Cardiac septum (tissue), 1 donor: ENCODE measurements at regions of chr11 and their contacts with region 1.

Region 1: DNA sequence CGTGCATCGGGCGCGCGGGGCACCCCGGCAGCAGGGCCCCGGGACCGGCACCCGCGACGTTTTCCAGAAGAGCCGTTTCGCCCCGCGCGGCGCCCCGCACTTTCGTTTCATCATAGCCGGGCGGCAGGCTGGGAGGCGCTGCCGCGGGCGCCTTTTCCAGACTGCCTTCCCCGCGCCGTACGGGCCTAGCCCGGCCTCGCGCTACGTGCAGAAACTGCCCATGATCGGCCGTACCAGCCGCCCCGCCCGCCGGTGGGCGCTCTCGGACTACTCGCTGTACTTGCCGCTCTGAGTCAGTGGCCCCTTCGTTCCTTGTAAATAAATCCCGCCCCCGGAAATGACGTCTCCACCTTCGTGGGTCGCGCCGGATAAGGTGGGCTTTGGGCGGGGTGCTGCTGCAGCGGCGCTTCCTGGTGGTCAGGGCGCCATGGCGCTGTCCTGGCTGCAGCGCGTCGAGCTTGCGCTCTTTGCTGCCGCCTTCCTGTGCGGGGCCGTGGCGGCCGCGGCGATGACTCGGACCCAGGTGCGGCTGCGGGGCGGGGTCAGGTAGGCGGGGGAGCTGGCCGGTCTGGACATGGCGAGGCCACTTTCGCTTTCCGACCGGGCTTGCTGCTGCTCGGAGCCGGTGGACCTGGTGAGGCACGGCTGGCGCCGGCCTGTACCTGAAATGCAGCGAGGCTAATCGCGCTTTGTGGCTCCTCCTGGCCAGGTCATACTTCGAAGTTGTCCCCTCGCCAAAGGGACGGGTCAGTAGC is at the start of gene TMEM179B:
- DNase-seq: peak; percentile 98
- total RNA-seq, gene TMEM179B: 12.0 TPM

Region 2: DNA sequence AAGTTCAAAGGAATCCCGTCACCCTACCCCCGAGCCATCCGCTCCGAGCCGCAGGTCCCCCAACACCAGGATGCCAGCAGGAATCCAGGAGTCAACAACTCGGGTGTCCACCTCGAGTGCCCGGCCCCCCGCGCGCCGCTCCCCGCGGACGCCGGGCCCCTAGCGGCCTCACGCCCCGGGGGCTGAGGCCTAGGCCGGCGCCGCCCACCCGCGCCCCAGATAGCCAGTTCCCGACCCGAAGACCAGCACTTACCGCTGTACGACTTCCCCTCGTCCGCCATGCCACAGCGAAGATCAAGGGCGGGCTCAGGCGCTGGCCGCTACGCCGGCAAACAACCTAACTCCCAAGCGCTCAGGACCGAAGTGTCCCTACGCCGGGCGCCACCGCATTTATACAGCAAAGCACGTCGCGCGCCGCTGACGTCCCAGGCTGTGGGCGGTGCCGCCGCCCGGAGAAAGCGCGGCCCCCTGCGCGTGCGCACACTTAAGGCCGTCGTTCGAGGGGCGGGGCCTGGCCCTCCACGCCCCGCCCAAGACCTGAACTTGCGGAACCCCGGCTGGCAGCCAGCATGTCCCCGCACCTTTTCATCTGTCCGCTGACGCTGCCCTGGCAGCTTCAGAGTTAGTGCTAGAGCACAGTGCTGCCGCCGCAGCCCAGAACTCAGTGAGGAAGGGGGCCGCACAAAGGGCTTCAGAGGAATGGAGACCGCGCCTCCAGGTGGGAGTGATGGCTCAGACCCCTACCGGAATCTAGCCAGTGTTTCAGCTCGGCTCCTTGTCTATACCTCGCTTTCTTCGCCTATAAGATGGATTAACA is 18.1 kb after region 1 on chr11 and contains the start of gene NXF1:
- intact Hi-C with region 1: loop called (anchors 1 kb)
- DNase-seq: peak; percentile 98
- total RNA-seq, gene NXF1: 36.7 TPM

Region 3: DNA sequence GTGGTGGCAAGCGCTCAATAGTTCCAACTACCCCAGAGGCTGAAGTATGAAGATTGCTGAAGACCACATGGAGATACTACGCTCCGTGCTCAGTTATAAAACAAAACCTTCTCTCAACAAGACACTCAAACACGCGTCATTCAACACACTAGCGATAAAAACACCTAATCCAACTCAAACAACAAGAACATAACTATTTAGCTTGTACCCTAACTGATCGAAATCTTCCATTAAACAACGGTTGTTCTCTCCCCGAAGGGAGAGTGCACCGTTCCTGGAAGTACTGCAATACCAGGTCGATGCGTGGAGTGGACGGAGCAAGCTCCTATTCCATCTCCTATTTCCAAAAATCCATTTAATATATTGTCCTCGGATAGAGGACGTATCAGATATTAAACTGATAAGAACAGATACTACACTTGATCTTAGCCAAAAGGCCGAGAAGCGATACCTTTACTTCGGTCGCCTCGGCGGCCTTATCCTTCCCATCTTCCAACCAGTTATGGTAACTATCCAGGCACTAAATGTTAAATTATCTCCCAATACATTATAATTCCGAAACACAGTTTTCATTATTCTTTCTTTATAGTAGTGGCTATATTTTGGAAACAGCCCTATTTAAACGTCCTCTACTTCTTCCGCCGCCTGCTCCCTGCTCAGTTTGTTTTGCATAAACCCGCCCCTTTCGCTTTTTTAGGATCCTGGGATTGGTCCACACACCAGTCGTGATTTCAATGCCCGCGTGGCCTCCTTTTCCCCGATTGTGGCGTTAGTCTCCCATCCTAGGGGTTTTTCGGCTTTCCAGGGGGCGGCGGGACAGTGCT is 54.4 kb after region 1 on chr11:
- intact Hi-C with region 1: loop called (anchors 2 kb)
- DNase-seq: peak; percentile 92

Region 4: GRCh38 chr11:62860835-62861563 is 73.8 kb after region 1 on chr11:
- intact Hi-C with region 1: loop called (anchors 2 kb)
- DNase-seq: no peak

Region 5: GRCh38 chr11:62880803-62881578 is 93.8 kb after region 1 on chr11 and contains the start of gene SLC3A2:
- intact Hi-C with region 1: loop called (anchors 1 kb)
- DNase-seq: peak; percentile 94
- total RNA-seq, gene SLC3A2: 38.6 TPM